Naive thymus-derived CD4-positive, alpha-beta T cell (primary cell): ENCODE measurements at regions of chr1 and their contacts with region 1.

Region 1: DNA sequence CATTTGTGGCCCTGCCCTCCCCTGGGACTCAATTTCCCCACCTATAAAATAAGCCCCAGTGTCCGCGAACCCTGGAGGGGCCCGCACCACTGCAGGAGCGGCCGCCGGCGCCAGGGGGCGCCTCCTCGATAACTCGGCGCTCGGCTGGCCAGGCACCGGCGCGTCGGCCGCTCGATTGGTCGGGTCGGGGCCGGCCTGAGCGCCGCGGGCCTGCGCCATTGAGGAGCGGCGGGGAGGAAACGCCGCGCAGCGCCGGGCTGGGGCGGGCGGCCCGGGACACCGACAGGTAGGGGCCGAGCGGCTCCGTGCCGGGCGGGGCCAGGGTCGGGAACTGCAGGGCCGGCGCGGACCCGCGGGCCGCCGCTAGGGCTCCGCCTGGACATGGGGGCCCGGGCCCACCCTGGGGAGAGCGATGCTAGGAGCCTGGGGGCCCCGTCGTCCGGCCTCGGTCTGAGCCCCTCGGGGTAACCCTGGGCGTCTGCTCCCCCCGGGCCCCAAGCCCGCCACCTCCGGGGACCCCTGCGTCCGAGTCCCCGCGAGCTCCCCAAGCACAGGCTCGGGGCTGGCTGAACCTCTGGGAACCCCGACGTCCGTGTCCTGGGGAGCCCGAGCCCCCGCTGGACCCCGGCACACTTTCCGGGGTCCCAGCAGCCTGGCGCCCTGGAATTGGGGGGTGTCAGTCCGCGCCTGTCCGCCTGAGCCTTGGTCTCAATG is at the start of gene VPS13D:
- DNase-seq: peak; percentile 70 to 89 (median 84)
- ATAC-seq: peak; percentile 98
- H3K4me3 ChIP-seq: peak within 1 kb of the TSS; percentile 82
- H3K4me3 Mint-ChIP-seq: peak within 1 kb of the TSS; percentile 84 to 95 (median 90)
- H3K27ac ChIP-seq: peak within 1 kb of the TSS; percentile 92
- H3K27ac Mint-ChIP-seq: peak within 1 kb of the TSS; percentile 63 to 91 (median 85)
- H3K4me1 ChIP-seq: peaks cover 19 to 21% of the 10 kb centered on the region in 2 donors
- H3K4me1 Mint-ChIP-seq: peaks cover 4 to 38% (median 27%) of the 10 kb centered on the region in 7 donors
- H3K27me3 ChIP-seq: no peaks in the 10 kb centered on the region
- H3K27me3 Mint-ChIP-seq: peaks cover 0 to 6% (median 0%) of the 10 kb centered on the region in 5 donors
- total RNA-seq, gene VPS13D: 43.8 to 94.4 (median 77.3) TPM

Region 2: DNA sequence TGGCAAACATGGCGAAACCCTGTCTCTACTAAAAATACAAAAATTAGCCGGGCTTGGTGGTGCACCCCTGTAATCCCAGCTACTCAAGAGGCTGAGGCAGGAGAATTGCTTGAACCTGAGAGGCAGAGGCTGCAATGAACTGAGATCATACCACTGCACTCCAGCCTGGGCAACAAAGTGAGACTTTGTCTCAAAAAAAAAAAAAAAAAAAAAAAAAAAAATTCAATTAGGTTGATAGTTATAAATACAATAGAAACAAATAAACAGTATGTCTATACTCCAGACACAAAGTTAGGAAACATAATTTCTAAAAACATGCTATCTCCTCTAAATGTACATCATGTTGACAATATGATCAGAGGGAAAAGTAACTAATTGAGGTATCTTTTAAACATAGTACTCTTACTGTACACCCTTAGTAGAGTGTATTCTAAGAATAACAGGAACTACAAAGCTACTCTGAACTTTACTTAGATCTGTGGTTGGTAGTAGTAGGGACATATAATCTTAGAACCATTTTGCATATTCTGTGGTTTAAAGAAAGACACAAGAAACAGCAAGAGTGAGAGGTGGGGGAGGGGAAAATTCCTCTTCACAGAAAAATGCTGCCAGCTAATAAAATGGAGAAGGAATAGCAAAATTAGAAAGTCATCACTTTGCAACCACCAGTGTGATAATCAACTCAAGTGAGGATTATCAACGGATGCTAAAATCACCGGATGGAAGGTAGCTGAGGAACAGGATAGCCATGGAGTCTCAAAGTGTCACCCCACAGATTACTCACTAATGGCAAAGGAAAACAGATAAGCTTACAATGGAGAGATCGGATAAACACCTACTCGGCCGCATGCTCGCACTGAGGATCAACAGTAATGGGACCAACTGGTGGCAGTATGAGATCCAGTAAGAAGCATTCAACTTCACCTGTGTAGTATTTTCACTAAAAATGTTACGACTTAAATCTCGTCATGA is 1002.6 kb before region 1 on chr1:
- CTCF ChIA-PET with region 1: no interaction called
- POLR2A ChIA-PET with region 1: no interaction called
- intact Hi-C with region 1: no loop called
- DNase-seq: no peak
- ATAC-seq: no peak
- H3K4me3 ChIP-seq: no peak overlapping the region
- H3K4me3 Mint-ChIP-seq: peak overlapping the region in 5 of 10 donors; percentile 5 to 66 (median 31)
- H3K27ac ChIP-seq: no peak overlapping the region
- H3K27ac Mint-ChIP-seq: peak overlapping the region; percentile 9 to 88 (median 49)
- H3K4me1 ChIP-seq: peaks cover 0 to 6% of the 10 kb centered on the region in 2 donors
- H3K4me1 Mint-ChIP-seq: peaks cover 6 to 21% (median 21%) of the 10 kb centered on the region in 7 donors
- H3K27me3 ChIP-seq: no peaks in the 10 kb centered on the region
- H3K27me3 Mint-ChIP-seq: no peaks in the 10 kb centered on the region

Region 3: DNA sequence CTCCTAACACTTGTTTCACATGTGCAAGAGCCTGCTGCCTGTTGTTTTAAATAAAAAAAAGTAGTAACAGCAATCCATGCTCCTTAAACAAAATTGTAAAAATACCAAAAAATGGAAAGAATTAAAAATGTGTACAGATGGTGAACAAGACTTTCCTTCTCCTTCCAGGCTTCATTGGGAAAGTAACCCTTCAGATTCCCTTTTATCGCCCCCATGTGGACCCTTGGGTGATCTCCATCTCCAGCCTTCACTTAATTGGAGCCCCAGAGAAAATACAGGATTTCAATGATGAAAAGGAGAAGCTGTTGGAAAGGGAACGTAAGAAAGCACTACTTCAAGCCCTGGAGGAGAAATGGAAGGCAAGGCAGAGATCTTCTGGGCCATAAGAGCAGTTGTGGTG is 14.1 kb after region 1 on chr1:
- CTCF ChIA-PET with region 1: interaction called, 3 read pairs
- POLR2A ChIA-PET with region 1: no interaction called
- intact Hi-C with region 1: loop called in 1 of 2 experiments (anchors 1 kb)
- DNase-seq: no peak
- ATAC-seq: no peak
- H3K4me3 ChIP-seq: no peak overlapping the region
- H3K4me3 Mint-ChIP-seq: no peak overlapping the region
- H3K27ac ChIP-seq: no peak overlapping the region
- H3K27ac Mint-ChIP-seq: no peak overlapping the region
- H3K4me1 ChIP-seq: no peaks in the 10 kb centered on the region
- H3K4me1 Mint-ChIP-seq: peaks cover 0 to 14% (median 6%) of the 10 kb centered on the region in 7 donors
- H3K27me3 ChIP-seq: no peaks in the 10 kb centered on the region
- H3K27me3 Mint-ChIP-seq: no peaks in the 10 kb centered on the region